ENCODE measurements at regions of chr2 and their contacts with region 1.

Region 1: DNA sequence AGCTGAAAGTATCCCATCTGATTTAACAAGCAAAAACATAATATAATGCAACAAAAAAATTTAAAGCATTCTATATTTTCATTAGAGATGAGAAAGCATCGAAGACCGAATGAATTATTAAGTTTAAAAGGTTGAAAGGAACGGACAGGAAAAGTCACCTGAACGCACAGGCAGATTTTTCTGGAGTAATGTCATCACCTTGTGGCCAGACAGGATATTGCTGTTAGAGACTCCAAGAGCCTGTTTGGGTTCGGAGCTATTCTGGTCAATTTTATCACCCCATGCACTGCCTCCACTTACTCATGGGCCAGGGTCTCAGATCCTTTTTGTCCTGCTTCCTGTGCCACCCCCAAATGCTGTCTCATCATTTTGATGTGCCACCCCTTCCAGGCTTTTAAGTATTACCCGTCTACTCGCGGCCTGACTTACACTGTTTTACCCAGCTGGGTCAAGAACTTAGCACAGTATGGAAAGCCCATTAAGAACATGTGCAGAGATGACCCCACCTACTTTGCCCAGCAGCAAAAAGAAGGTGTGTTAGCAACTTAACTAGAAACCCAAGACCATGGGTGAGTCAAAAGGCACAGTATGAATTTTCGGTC is 27.3 kb downstream of the GKN2 start:
- DNase-seq: peak; percentile 35 to 52
- H3K4me3 ChIP-seq: no peak overlapping the region
- H3K27ac ChIP-seq: no peak overlapping the region
- H3K4me1 ChIP-seq: peaks cover 6 to 16% of the 10 kb centered on the region in 2 donors
- H3K27me3 ChIP-seq: no peaks in the 10 kb centered on the region
- CTCF ChIP-seq: peak; percentile 80 to 98 (median 88)
- POLR2A ChIP-seq: no peak

Region 2: DNA sequence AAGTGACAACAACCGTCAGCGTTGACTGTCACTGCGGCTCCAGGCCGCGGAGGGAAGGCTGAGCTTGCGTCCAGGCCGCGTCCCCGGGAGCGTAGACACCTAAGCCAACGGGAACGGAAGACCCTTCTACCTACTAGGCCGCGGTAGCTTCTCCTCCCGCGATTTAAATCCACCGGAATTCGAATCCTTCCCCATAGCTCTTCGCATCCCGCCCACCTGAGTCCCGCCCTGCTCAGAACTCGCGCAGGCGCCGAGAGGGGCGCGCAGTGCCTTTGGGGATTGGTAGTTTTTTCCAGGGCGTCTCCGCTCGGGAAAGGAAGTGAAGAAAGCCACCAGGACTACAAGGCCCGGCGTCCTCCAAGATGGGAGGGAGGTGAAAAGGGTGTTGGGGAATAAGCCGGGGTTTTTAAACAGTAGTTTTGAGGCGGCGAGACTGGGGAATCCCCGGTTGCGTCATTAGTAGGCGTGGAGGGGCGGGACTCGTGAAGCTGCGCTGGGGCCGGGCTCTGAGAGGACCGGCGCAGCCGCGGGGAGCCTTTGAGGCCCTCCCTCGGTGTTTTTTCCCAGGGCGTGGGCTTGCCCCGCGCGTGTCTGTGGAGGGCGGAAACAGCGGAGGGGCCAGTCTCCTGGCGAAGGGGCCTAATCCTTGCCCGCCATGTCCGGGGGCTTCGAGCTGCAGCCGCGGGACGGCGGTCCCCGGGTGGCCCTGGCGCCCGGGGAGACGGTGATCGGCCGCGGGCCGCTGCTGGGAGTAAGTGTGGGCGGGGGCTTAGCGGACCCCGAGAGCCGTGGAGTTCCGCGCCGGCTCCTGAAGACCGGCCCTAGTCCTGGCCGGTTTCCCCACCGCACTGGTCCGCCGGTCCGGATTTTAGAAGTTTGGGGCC is 458.1 kb before region 1 on chr2 and contains the starts of genes APLF and FBXO48:
- intact Hi-C with region 1: loop called (anchors 10 kb)
- DNase-seq: peak; percentile 98 to 99
- H3K4me3 ChIP-seq: peak within 1 kb of the TSS; percentile 67 to 95 (median 81)
- H3K27ac ChIP-seq: peak within 1 kb of the TSS; percentile 52 to 79 (median 71)
- H3K4me1 ChIP-seq: peaks cover 5 to 9% of the 10 kb centered on the region in 2 donors
- H3K27me3 ChIP-seq: no peaks in the 10 kb centered on the region
- CTCF ChIP-seq: no peak
- POLR2A ChIP-seq: peak in 1 of 2 donors; percentile 72
- total RNA-seq, gene APLF: 8.7 to 12.9 (median 9.6) TPM
- total RNA-seq, gene FBXO48: 0.63 to 1.8 (median 1.0) TPM

Region 3: DNA sequence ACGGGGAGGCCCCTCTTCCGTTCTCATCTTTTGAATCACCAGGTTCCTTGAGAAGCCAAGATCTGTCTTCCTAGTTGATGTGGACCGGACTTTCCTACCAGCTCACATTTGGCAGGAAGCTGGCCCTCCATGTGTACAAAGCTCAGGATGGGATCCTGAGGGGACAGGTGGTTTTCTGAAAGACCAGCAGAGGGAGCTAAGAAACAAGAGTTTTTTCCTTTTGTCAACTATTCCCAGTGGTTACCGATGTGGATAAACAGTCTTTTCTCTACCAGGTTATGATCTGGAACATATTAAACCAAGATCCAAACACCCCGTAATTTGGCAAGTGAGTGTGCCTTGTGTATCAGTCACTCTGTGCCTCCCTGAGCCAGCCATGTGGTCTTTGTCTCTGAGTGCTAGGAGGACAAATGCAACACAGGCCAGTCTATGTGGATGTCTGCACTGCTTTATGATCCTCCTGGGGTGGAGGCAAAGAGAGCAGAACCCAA is 215.9 kb before region 1 on chr2:
- intact Hi-C with region 1: loop called (anchors 5 kb)
- DNase-seq: peak in 1 of 2 donors; percentile 17
- H3K4me3 ChIP-seq: no peak overlapping the region
- H3K27ac ChIP-seq: no peak overlapping the region
- H3K4me1 ChIP-seq: no peaks in the 10 kb centered on the region
- H3K27me3 ChIP-seq: no peaks in the 10 kb centered on the region
- CTCF ChIP-seq: peak; percentile 24 to 73 (median 52)
- POLR2A ChIP-seq: no peak

Measured in thyroid gland (tissue), 4 donors.